Posterior vena cava (tissue), 2 donors: ENCODE measurements at regions of chr2 and their contacts with region 1.

Region 1: DNA sequence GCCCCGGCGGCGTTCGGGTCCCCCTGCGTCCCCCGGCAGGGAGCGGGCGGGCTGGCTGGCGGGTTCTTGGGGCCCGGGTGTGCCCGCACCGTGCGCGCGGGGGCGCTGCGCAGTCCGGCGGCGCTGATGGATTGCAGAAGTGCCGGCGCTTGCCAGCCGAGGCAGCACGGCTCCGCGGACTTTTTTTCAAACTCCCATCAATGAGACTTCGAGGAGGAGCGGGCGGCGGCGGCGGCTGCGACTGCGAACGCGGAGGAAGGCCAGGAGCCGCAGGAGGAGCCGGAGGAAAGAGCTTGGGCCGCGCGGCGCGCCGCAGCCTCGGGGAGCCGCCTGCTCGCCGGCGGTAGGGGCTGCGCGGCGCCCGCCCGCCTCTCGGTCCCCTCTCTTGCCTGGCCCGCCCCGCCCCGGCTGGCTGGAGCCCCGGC is at the start of gene GLI2:
- DNase-seq: peak; percentile 91
- total RNA-seq, gene GLI2: 13.0 to 21.1 TPM

Region 2: DNA sequence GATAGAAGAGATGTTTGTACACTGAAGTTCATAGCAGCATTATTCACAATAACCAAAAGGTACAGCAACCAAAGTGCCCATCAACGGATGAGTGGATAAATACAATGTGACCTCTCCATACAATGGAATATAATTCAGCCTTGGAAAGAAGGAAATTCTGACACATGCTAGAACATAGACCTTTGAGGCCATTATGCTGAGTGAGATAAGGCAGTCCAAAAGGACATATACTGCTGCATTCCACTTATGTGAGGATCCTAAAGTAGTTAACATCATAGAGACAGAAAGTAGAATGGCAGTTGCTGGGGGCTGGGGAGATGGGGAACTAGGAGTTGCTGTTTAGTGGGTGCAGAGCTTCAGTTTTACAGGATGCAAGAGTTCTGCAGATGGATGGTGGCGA is 38.3 kb before region 1 on chr2:
- intact Hi-C with region 1: loop called in 1 of 2 experiments (anchors 2 kb)
- DNase-seq: no peak

Region 3: GRCh38 chr2:120802158-120802557 is 66.4 kb after region 1 on chr2:
- intact Hi-C with region 1: loop called in 1 of 2 experiments (anchors 10 kb)
- DNase-seq: peak; percentile 88

Region 4: DNA sequence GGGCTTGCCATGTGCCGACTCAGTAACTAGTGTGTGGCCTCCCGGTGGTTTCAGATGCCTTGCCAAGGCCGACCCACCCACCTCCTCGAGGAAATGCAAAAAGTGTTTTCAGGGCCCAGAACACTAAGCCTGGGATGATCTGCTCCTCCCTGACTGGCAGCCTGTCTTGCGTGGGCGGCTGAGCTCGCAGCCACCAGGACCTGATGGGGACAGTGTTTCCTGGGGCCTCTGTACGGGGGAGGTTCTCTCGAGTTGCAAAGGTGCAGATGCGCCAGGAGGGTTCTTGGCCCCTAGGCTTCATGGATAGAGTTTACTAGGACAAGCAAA is 85.2 kb after region 1 on chr2:
- intact Hi-C with region 1: loop called in 1 of 2 experiments (anchors 1 kb)
- DNase-seq: peak; percentile 85

Region 5: DNA sequence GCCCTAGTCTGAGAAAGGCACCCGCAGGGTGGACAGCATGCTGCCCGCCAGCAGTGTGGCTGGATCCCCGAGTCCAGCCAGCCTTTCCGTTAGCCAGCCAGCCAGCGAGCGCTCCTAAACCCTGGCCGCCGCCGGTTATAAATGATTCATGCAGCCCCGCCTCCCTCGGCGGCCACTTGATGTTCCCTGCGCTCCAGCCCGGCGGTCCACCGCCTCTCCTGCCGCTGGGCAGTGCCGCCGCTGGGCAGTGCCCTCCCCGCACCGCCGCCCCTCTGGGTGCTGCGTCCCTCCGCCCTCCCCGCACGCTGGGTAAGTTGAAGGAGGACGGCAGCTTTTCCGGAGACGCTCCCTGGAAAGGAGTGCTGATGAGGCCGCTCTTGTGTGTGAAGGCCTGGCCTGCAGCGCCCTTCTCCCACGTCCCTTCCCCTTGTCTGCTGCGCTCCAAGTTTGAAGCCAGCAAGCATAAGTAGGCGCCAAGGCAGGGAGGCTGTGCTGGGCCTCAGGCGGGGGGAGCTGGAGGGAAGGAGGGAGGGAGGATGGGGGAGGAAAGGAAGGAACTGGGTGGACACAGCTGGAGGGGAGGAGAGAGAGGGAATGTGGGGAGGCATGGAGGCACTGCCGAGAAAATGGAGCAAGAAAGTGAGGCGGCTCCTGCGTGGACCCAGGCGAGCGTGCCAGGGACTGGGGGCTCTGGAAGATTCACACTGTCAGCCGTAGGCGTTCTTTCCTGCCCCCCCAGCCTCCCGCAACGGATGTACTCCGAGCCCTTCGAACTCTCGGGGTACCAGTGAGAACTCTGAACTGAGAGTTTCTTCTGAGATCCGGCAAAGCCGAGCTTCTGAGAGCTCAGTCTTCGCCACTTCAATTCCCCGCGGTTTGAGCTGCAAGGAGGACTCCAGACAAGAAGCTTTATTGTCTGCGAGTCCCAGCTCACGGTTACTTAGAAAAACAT is 131.8 kb after region 1 on chr2:
- intact Hi-C with region 1: loop called (anchors 5 to 10 kb)
- DNase-seq: peak; percentile 94

Region 6: GRCh38 chr2:120949027-120949956 is 213.5 kb after region 1 on chr2:
- intact Hi-C with region 1: loop called in 1 of 2 experiments (anchors 10 kb)
- DNase-seq: peak; percentile 75

Region 7: GRCh38 chr2:121418494-121419058 is 682.8 kb after region 1 on chr2:
- intact Hi-C with region 1: no loop called
- DNase-seq: no peak

Region 8: DNA sequence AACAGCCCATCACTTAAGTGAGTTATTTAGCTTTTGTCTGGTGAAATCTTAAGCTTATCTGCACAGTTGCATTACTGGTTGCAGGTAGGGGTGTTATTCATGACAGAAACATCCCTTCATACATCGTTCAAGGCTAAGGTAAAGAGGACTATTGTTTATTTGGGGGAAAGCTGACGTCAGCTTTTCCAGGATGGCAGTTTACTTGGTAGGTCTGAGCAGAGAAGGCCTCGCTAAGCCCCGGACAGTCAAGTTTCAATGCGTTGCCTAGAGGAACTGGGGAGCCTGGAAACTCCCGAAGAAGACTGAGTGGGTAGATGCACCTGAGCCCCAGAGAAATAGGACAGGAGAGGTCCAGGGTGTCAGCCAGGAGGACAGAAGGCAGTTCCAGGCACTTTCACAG is 797.1 kb after region 1 on chr2:
- intact Hi-C with region 1: no loop called
- DNase-seq: no peak